Colonic mucosa (tissue), 4 donors: ENCODE measurements at regions of chr5 and their contacts with region 1.

Region 1: GRCh38 chr5:892394-893136 is at the starts of genes BRD9 and TRIP13:
- DNase-seq: peak; percentile 87
- H3K4me3 ChIP-seq: peak within 1 kb of the TSS; percentile 89
- H3K27ac ChIP-seq: peak within 1 kb of the TSS; percentile 80
- H3K4me1 ChIP-seq: peaks cover 4% of the 10 kb centered on the region
- H3K27me3 ChIP-seq: no peaks in the 10 kb centered on the region
- CTCF ChIP-seq: no peak
- total RNA-seq, gene BRD9: 22.3 to 41.8 TPM
- total RNA-seq, gene TRIP13: 5.8 to 18.1 TPM

Region 2: DNA sequence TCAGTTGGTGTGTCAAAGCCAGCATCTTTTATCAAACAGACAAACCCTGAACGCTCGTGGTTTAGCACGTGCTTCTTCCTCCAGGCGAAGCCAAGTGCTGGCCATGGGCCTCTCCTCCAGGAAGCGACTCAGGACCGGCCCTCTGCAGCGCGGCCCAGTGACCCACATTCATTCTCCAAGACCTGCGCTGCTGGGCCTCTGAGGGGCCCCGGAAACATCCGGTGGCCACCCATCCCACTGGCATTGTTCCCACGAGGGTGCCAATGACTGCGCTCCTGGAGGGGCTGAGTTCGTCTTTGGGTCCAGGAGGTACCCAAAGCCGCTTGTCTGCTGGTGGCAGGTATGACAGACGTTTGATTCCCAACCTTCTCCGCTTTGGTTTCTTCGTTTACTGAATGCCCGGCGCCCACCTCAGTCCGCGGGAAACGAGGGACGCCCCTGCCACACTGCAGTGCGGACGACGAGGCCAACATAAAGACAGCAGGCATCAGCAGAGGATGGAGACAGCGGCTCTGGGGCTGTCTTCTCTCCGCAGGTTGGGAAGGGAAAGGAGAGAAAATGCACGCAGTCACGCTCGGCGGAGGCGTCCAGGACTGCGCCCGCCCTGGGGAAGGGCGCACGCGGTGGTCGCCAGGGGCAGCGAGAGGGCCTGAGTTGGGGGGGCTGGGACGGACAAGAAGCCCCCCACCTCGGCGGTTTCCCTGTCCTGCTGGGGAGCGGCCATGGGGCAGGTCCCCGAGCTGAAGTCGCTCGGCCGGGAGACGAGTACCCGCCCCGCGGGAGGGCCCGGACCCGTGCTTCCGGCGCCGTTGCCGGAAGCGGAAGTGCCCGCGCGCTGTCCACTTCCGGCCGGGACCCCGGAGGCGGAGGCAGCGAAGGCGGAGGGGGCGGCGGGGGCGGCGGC is 450.0 kb before region 1 on chr5 and contains the start of gene EXOC3:
- intact Hi-C with region 1: loop called (anchors 5 kb)
- DNase-seq: peak; percentile 82
- H3K4me3 ChIP-seq: peak within 1 kb of the TSS; percentile 93
- H3K27ac ChIP-seq: peak within 1 kb of the TSS; percentile 74
- H3K4me1 ChIP-seq: no peaks in the 10 kb centered on the region
- H3K27me3 ChIP-seq: no peaks in the 10 kb centered on the region
- CTCF ChIP-seq: no peak
- total RNA-seq, gene EXOC3: 52.0 to 58.7 TPM

Region 3: GRCh38 chr5:759111-759751 is 133.3 kb before region 1 on chr5:
- intact Hi-C with region 1: no loop called
- DNase-seq: peak; percentile 84
- H3K4me3 ChIP-seq: peak overlapping the region; percentile 8
- H3K27ac ChIP-seq: peak overlapping the region; percentile 7
- H3K4me1 ChIP-seq: peaks cover 21% of the 10 kb centered on the region
- H3K27me3 ChIP-seq: no peaks in the 10 kb centered on the region
- CTCF ChIP-seq: no peak